Dorsolateral prefrontal cortex (tissue), 120 donors: ENCODE measurements at regions of chr19 and their contacts with region 1.

Region 1: DNA sequence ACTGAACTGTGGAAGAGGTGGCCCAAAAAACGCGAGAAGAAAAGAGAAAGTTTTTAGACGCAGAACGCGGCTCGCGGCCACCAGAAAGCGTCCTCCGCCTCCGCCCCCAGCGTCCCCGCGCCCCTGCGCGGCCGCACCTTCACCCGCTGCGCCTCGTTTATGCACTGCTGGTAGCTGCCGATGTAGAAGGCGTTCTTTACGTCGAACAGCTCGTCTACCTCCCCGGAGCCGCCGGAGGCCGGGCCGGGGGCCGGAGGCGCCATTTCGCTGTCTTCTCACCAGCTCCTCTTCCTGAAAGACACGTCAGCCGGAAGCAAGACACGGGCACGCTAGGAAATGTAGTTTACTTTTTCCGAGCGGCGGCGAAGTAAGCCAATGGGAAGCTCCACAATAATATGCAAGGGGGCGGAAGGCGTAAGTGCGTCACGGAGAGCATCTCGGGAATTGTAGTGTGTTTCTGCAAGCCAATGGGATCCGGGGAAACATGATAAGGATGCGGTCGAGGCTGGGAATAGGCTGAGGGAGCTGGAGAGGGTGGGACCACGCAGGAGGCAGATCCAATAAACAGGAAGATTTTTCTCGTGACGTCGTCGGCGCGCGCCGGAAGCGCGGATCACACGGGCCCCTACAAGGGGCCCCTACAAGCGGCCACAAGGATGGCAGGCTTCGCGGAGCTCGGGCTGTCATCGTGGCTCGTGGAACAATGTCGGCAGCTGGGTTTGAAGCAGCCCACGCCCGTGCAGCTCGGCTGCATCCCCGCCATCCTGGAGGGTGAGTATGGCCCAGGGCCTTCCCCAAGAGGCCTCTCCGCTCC is at the starts of genes COPE and DDX49:
- DNase-seq: peak; percentile 97 to 100 (median 99)
- H3K4me3 ChIP-seq: peak within 1 kb of the TSS; percentile 65 to 100 (median 96)
- H3K27ac ChIP-seq: peak within 1 kb of the TSS in 56 of 59 donors; percentile 11 to 95 (median 84)
- H3K27me3 ChIP-seq: no peaks in the 10 kb centered on the region
- CTCF ChIP-seq: peak in 41 of 56 donors; percentile 3 to 62 (median 28)
- total RNA-seq, gene COPE: 108 to 189 (median 147) TPM
- total RNA-seq, gene DDX49: 28.5 to 56.4 (median 38.5) TPM

Region 2: GRCh38 chr19:18571564-18572300 is 347.6 kb before region 1 on chr19 and contains the start of gene UBA52:
- intact Hi-C with region 1: loop called in 1 of 2 experiments (anchors 5 kb)
- DNase-seq: peak; percentile 94 to 98 (median 96)
- H3K4me3 ChIP-seq: peak within 1 kb of the TSS; percentile 72 to 100 (median 95)
- H3K27ac ChIP-seq: peak within 1 kb of the TSS; percentile 32 to 93 (median 82)
- H3K27me3 ChIP-seq: no peaks in the 10 kb centered on the region
- CTCF ChIP-seq: peak in 35 of 56 donors; percentile 1 to 59 (median 29)
- total RNA-seq, gene UBA52: 378 to 577 (median 453) TPM

Region 3: DNA sequence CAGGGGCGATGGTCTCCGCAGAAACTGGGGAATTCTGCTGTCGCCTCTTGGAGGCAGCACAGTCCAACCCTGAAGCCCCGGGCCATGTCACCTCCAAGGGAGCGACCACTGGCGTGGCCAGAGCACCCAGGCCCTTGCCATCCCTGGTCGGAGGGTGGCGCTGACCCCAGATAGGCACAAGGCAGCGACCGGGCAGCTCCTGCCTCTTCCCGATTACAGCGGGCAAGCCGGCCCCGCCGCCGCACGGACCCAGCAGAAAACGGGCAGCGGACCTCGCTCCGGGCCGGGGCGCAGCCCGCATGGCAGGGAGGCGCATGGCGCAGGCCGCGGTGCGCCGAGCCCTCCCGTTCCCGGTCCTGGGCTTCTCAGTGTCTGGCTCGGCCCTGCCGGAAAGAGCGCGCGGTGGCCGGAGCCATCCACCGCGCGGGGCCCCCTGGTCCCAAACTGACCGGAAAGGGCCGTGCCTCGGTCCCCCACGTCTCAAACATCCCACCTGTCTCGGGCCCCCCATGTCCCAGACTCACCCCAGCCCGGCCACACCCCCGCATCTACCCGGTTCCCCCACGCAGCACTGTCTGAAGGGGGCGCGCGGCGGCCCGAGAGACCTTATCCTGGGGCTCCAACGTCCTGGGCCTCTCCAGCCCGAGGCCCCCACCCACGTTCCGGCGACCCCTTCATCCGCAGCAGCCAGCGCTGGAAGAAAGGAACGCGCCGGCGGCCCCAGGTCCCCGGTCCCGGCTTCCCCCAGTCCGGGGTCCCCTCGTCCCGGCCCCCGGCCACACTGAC is 24.1 kb before region 1 on chr19:
- intact Hi-C with region 1: loop called (anchors 1 to 2 kb)
- DNase-seq: peak; percentile 66 to 91 (median 88)
- H3K4me3 ChIP-seq: peak overlapping the region; percentile 61 to 94 (median 81)
- H3K27ac ChIP-seq: peak overlapping the region; percentile 83 to 100 (median 98)
- H3K27me3 ChIP-seq: peaks cover 0 to 3% (median 0%) of the 10 kb centered on the region in 45 donors
- CTCF ChIP-seq: peak in 54 of 56 donors; percentile 32 to 77 (median 57)

Region 4: GRCh38 chr19:18985257-18985656 is 66.0 kb after region 1 on chr19:
- intact Hi-C with region 1: loop called in 1 of 2 experiments (anchors 5 kb)
- DNase-seq: peak in 3 of 10 donors; percentile 34 to 47 (median 45)
- H3K4me3 ChIP-seq: peak overlapping the region in 2 of 59 donors; percentile 4 to 14
- H3K27ac ChIP-seq: peak overlapping the region in 50 of 59 donors; percentile 4 to 82 (median 64)
- H3K27me3 ChIP-seq: no peaks in the 10 kb centered on the region
- CTCF ChIP-seq: peak in 1 of 56 donors; percentile 16